Activated CD8-positive, alpha-beta memory T cell treated with anti-CD3 and anti-CD28 coated beads, Interleukin-2, amount 10 ng/mL, durations not matched to agents 7 days and 5 days (primary cell): ENCODE measurements at regions of chr5 and their contacts with region 1.

Region 1: DNA sequence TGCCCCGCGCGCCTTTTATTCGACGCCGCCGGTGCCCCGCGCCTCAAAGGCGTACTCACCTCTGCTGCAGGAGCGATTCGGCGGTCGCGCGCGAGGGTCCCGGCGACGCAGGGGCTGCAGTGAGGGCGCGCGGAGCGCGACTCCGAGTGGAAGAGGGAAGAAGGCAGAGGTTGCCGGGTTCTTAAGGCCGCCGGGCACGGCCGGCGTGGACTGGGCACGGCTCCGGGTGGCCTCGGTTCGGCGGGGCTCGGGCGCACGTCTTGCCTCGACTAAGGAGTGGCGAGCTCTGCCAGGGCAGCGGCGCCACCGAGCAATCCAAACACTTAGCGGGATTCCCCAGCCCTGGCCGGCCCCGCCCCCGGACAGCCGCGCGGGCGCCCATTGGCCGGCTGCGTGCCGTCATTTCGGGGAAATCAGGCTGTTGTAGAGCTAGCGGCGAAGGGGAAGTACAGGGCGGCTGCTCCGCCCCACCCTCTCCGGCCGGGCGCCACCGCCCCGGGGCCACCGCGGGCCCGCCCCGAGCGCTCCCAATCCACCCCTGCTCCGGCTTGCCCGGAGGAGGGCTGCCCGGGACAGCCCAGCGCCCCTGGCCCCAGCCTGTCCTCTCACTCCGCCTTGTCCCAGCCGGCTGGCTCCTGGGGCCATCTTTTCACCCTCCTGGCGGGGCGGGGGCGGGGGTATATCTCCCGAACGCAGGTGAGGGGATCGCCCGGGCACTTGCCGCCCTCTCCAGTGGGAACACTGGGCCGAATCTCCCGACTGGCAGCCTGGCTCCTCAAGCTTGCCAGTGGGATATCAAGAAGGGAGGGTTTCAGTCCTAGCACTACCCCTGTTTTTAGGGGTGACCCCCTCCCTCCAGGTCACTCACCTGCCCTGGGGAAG is at the start of gene IRF1:
- DNase-seq: peak; percentile 98
- ATAC-seq: peak; percentile 79
- H3K4me3 Mint-ChIP-seq: peak within 1 kb of the TSS; percentile 95
- H3K27ac Mint-ChIP-seq: peak within 1 kb of the TSS; percentile 97
- H3K4me1 Mint-ChIP-seq: peaks cover 66% of the 10 kb centered on the region
- H3K27me3 Mint-ChIP-seq: no peaks in the 10 kb centered on the region
- total RNA-seq, gene IRF1: 205 to 223 TPM

Region 2: DNA sequence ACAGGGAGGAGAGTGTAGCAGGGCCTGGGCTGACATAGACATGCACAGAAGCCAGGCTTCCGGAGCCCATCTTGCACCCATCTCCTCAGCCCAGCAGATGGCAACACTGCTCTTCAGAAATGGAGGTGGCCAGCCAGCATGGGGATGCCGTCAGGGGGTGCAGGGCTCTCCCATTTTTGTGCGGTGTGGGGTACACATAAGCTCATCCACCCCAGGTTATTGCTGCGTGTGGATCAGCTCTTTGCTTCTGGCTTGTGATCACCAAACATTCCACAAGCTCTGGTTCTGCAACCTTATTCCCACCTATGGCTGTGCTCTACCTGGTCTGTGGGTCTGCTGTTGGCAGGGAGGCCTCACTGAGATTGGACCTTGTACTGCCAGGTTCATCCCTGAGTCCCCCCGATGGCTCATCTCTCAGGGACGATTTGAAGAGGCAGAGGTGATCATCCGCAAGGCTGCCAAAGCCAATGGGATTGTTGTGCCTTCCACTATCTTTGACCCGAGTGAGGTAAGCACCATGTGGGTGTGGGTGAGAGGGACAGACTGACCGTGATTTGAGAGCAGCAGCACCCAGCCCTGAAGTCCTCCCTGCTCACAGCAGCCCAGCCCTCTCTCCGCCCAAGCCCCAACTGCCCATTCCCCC is 104.0 kb before region 1 on chr5:
- CTCF ChIA-PET with region 1: interaction called, 328 read pairs
- DNase-seq: peak; percentile 88
- ATAC-seq: peak; percentile 96
- H3K4me3 Mint-ChIP-seq: no peak overlapping the region
- H3K27ac Mint-ChIP-seq: peak overlapping the region; percentile 69
- H3K4me1 Mint-ChIP-seq: peaks cover 50% of the 10 kb centered on the region
- H3K27me3 Mint-ChIP-seq: no peaks in the 10 kb centered on the region

Region 3: GRCh38 chr5:132410451-132411381 is 80.0 kb before region 1 on chr5:
- CTCF ChIA-PET with region 1: interaction called, 32 read pairs
- DNase-seq: peak; percentile 91
- ATAC-seq: peak; percentile 79
- H3K4me3 Mint-ChIP-seq: peak overlapping the region; percentile 97
- H3K27ac Mint-ChIP-seq: peak overlapping the region; percentile 99
- H3K4me1 Mint-ChIP-seq: peaks cover 58% of the 10 kb centered on the region
- H3K27me3 Mint-ChIP-seq: no peaks in the 10 kb centered on the region

Region 4: DNA sequence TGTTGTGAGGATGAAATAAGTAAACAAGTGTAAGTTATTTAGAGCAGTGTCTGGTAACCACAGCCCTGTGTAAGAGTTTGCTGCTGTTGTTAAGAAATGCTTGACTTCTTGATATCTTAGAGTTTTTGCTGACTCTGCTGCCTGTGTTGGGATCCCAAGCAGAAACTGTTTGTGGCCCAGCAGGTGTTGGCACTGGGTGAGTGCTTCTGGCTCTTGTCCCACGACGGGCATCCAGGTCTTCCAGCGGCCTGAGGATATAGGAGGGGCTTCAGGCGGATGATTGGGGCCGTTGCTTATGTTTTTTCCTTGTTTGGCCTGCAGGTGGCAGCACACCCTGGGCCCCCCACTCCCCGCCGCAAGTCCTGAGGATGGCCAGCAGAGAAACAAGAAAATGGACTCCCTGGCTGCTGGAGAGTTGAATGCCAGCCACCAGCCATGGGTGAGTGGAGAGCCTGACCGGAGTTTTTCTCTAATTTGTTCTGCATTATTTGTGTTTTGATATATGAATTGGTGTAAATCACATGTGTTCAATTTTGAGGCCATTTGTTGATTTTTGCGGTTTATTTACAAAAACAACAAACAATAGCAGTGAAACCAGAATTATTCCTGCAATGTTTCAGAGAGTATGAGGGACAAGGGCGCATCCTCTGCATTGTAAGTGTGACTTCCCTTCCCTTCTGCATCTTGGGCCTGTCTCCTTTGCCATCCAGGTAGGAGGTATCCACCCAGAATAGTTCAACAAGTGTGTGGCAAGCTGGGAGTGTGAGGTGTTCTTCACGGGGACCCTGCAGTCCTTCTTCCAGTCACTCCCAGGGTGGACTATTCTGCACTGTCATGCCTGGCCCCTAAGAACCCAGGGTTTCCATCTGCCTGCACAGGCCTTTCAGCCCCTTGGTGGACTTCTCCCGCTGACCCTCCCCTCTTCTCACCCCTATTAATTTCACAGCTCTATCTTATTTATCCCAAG is 70.9 kb before region 1 on chr5:
- CTCF ChIA-PET with region 1: interaction called, 85 read pairs
- DNase-seq: peak; percentile 79
- ATAC-seq: peak; percentile 75
- H3K4me3 Mint-ChIP-seq: peak overlapping the region; percentile 55
- H3K27ac Mint-ChIP-seq: peak overlapping the region; percentile 98
- H3K4me1 Mint-ChIP-seq: peaks cover 96% of the 10 kb centered on the region
- H3K27me3 Mint-ChIP-seq: no peaks in the 10 kb centered on the region

Region 5: GRCh38 chr5:132466433-132467286 is 24.1 kb before region 1 on chr5:
- CTCF ChIA-PET with region 1: interaction called, 57 read pairs
- DNase-seq: peak; percentile 93
- ATAC-seq: peak; percentile 77
- H3K4me3 Mint-ChIP-seq: peak overlapping the region; percentile 59
- H3K27ac Mint-ChIP-seq: peak overlapping the region; percentile 86
- H3K4me1 Mint-ChIP-seq: peaks cover 98% of the 10 kb centered on the region
- H3K27me3 Mint-ChIP-seq: no peaks in the 10 kb centered on the region

Region 6: GRCh38 chr5:132473019-132473531 is 17.7 kb before region 1 on chr5:
- CTCF ChIA-PET with region 1: interaction called, 57 read pairs
- DNase-seq: peak; percentile 96
- ATAC-seq: peak; percentile 90
- H3K4me3 Mint-ChIP-seq: peak overlapping the region; percentile 6
- H3K27ac Mint-ChIP-seq: peak overlapping the region; percentile 89
- H3K4me1 Mint-ChIP-seq: peaks cover 91% of the 10 kb centered on the region
- H3K27me3 Mint-ChIP-seq: no peaks in the 10 kb centered on the region

Region 7: DNA sequence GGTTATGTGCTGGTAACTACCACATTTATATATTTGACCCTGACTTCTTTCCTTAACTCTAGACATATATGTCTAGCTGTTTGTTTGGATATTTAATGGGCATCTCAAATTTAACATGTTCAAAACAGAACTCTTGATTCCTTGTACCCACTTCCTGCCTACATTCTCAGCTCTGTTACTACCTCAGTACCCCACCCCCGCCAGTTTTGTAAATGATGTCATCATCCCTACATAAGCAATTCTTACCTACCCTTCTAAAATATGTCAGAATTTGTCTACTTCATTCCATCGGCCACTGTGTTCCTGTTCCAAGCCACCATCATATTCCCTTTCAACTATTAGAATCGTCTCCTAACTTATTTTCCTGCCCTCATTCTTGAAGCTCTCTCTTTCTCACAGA is 70.9 kb after region 1 on chr5:
- CTCF ChIA-PET with region 1: no interaction called
- DNase-seq: peak; percentile 59
- ATAC-seq: no peak
- H3K4me3 Mint-ChIP-seq: no peak overlapping the region
- H3K27ac Mint-ChIP-seq: no peak overlapping the region
- H3K4me1 Mint-ChIP-seq: peaks cover 32% of the 10 kb centered on the region
- H3K27me3 Mint-ChIP-seq: no peaks in the 10 kb centered on the region